Naive thymus-derived CD8-positive, alpha-beta T cell (primary cell): ENCODE measurements at regions of chr12 and their contacts with region 1.

Region 1: GRCh38 chr12:98516184-98516873 is 939 bp downstream of the TMPO start:
- DNase-seq: peak; percentile 66 to 93 (median 84)
- ATAC-seq: peak; percentile 64 to 68
- H3K4me3 Mint-ChIP-seq: peak overlapping the region; percentile 94 to 100 (median 99)
- H3K27ac Mint-ChIP-seq: peak overlapping the region; percentile 96 to 99 (median 99)
- H3K4me1 Mint-ChIP-seq: peaks cover 17 to 66% (median 53%) of the 10 kb centered on the region in 4 donors
- H3K27me3 Mint-ChIP-seq: no peaks in the 10 kb centered on the region

Region 2: GRCh38 chr12:98490501-98491453 is 25.6 kb before region 1 on chr12:
- POLR2A ChIA-PET with region 1: interaction called, 147 read pairs
- DNase-seq: peak; percentile 69 to 92 (median 81)
- ATAC-seq: peak; percentile 84 to 93
- H3K4me3 Mint-ChIP-seq: peak overlapping the region; percentile 22 to 71 (median 49)
- H3K27ac Mint-ChIP-seq: peak overlapping the region; percentile 55 to 97 (median 94)
- H3K4me1 Mint-ChIP-seq: peaks cover 0 to 8% (median 5%) of the 10 kb centered on the region in 4 donors
- H3K27me3 Mint-ChIP-seq: no peaks in the 10 kb centered on the region

Region 3: GRCh38 chr12:98503592-98504367 is 12.5 kb before region 1 on chr12:
- POLR2A ChIA-PET with region 1: interaction called, 142 read pairs
- DNase-seq: peak; percentile 87 to 99 (median 93)
- ATAC-seq: peak; percentile 82 to 84
- H3K4me3 Mint-ChIP-seq: peak overlapping the region; percentile 84 to 99 (median 97)
- H3K27ac Mint-ChIP-seq: peak overlapping the region; percentile 96 to 100 (median 98)
- H3K4me1 Mint-ChIP-seq: peaks cover 15 to 28% (median 20%) of the 10 kb centered on the region in 4 donors
- H3K27me3 Mint-ChIP-seq: peaks cover 0 to 9% (median 0%) of the 10 kb centered on the region in 5 donors

Region 4: GRCh38 chr12:98544751-98545150 is 28.4 kb after region 1 on chr12:
- POLR2A ChIA-PET with region 1: no interaction called
- DNase-seq: no peak
- ATAC-seq: no peak
- H3K4me3 Mint-ChIP-seq: no peak overlapping the region
- H3K27ac Mint-ChIP-seq: no peak overlapping the region
- H3K4me1 Mint-ChIP-seq: peaks cover 0 to 10% (median 2%) of the 10 kb centered on the region in 4 donors
- H3K27me3 Mint-ChIP-seq: no peaks in the 10 kb centered on the region

Region 5: DNA sequence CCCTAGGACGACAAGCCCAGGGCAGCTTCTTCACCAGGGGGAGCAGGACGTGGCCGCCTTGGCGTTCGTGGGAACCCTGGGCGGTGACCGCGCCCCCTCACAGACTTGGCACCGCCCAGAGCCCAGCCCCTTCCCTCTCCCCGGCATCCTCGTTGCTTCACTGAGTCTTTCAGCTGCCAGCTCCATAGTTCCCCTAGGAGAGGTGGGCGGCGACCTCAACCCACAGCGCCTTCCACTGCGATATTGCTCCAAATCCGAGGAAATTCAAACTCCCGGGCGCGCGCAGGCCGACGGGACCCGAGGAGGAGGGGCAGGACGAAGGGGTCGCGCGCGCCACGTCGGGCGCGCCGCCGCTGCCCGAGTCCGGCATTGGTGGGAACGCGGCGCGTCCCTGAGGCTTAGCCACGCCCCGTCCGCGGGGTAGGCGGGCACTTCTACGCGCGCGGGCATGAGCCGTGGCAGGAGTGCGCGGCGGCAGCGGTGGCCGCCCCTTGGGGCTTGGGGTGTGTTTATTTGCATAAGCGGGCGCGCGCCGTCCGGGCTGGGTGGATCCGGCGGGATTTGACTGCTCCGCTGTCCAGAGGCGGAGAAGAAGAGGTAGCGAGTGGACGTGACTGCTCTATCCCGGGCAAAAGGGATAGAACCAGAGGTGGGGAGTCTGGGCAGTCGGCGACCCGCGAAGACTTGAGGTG is 128.5 kb after region 1 on chr12 and contains the starts of genes APAF1 and IKBIP:
- POLR2A ChIA-PET with region 1: interaction called, 10 read pairs
- DNase-seq: peak; percentile 92 to 98 (median 96)
- ATAC-seq: peak; percentile 85 to 92
- H3K4me3 Mint-ChIP-seq: peak within 1 kb of the TSS; percentile 97 to 100 (median 98)
- H3K27ac Mint-ChIP-seq: peak within 1 kb of the TSS; percentile 84 to 97 (median 95)
- H3K4me1 Mint-ChIP-seq: peaks cover 6 to 51% (median 34%) of the 10 kb centered on the region in 4 donors
- H3K27me3 Mint-ChIP-seq: no peaks in the 10 kb centered on the region
- polyA plus RNA-seq, gene APAF1: 5.2 to 9.5 (median 5.3) TPM
- polyA plus RNA-seq, gene IKBIP: 4.9 to 7.2 (median 5.0) TPM

Region 6: DNA sequence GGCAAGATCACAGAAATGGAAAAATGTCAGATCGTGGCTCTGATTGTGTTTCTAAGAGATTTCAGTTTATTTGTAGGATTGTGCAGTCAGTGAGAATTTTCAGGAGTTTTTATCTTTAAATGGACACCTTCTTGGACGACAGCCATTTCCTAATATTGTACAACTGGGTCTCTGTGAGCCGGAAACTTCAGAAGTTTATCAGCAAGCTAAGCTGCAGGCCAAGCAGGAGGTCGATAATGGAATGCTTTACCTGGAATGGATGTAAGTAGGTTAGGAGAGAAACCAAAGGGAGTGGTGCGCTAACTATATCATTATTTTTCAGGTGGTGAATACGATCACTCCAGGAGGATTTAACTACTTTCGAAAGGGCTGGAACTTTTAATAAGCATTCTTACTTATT is 155.1 kb after region 1 on chr12:
- POLR2A ChIA-PET with region 1: no interaction called
- DNase-seq: no peak
- ATAC-seq: no peak
- H3K4me3 Mint-ChIP-seq: no peak overlapping the region
- H3K27ac Mint-ChIP-seq: peak overlapping the region in 1 of 10 donors; percentile 21
- H3K4me1 Mint-ChIP-seq: peaks cover 3 to 13% (median 10%) of the 10 kb centered on the region in 4 donors
- H3K27me3 Mint-ChIP-seq: no peaks in the 10 kb centered on the region